Mammary epithelial cell (primary cell): ENCODE measurements at regions of chr12 and their contacts with region 1.

Region 1: GRCh38 chr12:57175428-57176138 is 28.2 kb upstream of the LRP1-AS start:
- DNase-seq: peak; percentile 95
- H3K4me3 ChIP-seq: peak overlapping the region in 2 of 3 experiments; percentile 28 to 31
- H3K27ac ChIP-seq: peak overlapping the region; percentile 5
- H3K4me1 ChIP-seq: peaks cover 30% of the 10 kb centered on the region
- H3K27me3 ChIP-seq: no peaks in the 10 kb centered on the region
- CTCF ChIP-seq: peak; percentile 86 to 91

Region 2: GRCh38 chr12:56709759-56710376 is 465.7 kb before region 1 on chr12:
- CTCF ChIA-PET with region 1: interaction called, 26 read pairs
- dilution Hi-C with region 1: no loop called
- in situ Hi-C with region 1: no loop called
- intact Hi-C with region 1: no loop called
- DNase-seq: no peak
- H3K4me3 ChIP-seq: no peak overlapping the region
- H3K27ac ChIP-seq: no peak overlapping the region
- H3K4me1 ChIP-seq: no peaks in the 10 kb centered on the region
- H3K27me3 ChIP-seq: no peaks in the 10 kb centered on the region
- CTCF ChIP-seq: no peak

Region 3: DNA sequence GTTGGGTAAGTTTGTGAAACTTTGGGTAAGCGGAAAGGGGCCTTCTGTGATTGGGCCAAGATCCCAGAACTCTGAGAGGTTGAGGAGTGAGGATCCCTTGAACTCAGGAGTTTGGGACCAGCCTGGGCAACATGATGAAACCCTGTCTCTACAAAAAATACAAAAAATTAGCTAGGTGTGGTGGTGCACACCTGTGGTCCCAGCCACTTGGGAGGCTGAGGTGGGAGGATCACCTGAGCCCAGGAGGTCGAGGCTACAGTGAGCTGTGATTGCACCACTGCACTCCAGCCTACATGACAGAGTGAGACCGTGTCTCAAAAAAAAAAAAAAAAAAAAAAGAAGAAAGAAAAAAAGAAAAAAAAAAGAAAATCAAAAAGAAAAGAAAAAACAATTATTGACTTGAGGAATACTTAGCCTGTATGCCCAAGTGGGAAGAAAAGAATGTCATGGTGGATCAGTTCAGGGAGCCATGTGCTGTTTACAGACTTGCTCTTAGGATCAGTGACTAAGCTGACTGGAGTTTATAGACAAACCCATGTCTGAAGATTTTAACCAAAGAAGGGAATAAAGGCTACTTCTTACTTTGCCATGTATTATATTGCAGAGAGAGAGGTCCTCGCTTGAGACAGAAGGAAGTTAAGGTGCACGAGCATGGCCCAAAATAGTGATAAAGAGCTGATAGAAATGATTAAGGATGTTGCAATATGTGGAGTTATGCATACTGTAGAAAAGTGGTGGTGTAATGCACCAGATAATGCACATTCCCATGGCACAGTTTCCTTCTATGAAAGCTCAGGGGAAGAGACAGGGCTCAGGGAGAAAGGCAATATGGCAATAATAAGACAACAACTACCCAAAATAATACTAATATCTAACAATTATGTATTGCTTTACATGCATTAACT is 411.6 kb before region 1 on chr12:
- CTCF ChIA-PET with region 1: no interaction called
- dilution Hi-C with region 1: loop called (anchors 5 kb)
- in situ Hi-C with region 1: no loop called
- intact Hi-C with region 1: loop called (anchors 10 kb)
- DNase-seq: no peak
- H3K4me3 ChIP-seq: no peak overlapping the region
- H3K27ac ChIP-seq: no peak overlapping the region
- H3K4me1 ChIP-seq: no peaks in the 10 kb centered on the region
- H3K27me3 ChIP-seq: no peaks in the 10 kb centered on the region
- CTCF ChIP-seq: no peak

Region 4: DNA sequence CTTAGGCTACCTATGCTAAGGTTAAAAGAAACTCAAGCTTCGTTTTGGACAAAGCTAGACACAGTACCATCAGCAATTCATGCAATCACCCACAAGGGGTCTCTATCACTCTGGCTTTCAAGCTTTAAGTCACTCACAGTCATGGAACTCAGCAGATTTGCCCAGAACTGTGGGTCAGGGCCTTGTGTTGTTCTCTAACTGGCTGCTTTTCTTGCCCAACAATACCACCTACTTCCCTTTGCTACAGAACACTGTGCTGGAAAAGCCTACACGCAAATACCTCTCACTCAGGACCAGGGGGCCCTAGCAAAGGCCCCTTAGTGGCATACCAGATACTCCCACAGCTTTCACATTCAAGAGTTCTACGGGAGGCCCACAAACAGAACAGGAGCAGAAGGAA is 106.1 kb before region 1 on chr12:
- CTCF ChIA-PET with region 1: no interaction called
- dilution Hi-C with region 1: no loop called
- in situ Hi-C with region 1: loop called in 1 of 2 experiments (anchors 10 kb)
- intact Hi-C with region 1: loop called (anchors 2 kb)
- DNase-seq: peak; percentile 63
- H3K4me3 ChIP-seq: no peak overlapping the region
- H3K27ac ChIP-seq: no peak overlapping the region
- H3K4me1 ChIP-seq: peaks cover 9% of the 10 kb centered on the region
- H3K27me3 ChIP-seq: no peaks in the 10 kb centered on the region
- CTCF ChIP-seq: peak; percentile 83 to 90

Region 5: DNA sequence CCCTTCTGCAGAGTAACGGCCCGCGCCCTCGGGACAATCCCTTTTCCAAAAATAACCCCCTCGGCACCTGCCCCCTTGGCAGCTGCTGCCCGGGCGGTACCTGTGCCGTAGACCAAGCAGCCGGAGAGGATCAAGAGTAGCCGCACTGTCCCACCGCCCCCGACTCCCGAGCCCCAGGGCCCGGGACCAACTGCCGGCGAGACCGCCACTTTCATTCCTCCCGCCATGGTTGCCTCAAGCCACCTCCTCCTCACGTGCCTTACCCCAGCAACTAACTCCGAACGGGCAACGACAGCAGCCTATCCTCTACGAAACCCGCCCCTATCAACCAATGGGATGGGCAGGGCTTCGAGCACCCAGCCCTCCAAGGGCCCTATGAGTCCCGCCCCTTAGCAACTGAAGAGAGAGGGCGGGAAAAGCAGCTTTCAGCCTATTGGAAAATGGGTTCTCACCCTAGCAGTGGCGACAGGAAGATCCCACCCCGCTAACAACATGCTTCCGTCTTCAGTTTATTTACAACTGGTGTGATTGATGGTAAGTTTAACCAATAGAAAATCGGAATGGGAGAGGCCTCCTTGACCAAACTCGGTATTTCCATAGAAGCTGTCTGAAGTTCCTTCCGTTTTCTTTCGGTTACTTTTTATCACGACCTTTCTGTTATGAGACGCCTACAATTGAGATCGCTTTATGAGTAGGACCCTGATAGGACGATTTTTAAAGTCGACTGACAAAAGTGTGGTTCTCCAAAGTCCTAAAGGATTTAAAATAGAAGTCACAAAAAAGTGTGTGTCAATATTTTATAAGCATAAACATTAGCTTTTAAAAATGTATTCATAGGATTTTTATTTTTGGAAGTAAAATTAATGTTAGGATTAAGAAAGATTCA is 96.8 kb before region 1 on chr12 and contains the start of gene NEMP1:
- CTCF ChIA-PET with region 1: no interaction called
- dilution Hi-C with region 1: loop called (anchors 5 kb)
- in situ Hi-C with region 1: loop called in 1 of 2 experiments (anchors 10 kb)
- intact Hi-C with region 1: no loop called
- DNase-seq: peak; percentile 100
- H3K4me3 ChIP-seq: peak within 1 kb of the TSS; percentile 82 to 97 (median 92)
- H3K27ac ChIP-seq: peak within 1 kb of the TSS; percentile 83
- H3K4me1 ChIP-seq: peaks cover 6% of the 10 kb centered on the region
- H3K27me3 ChIP-seq: no peaks in the 10 kb centered on the region
- CTCF ChIP-seq: no peak
- total RNA-seq, gene NEMP1: 7.3 to 31.0 TPM

Region 6: GRCh38 chr12:57124259-57124877 is 51.2 kb before region 1 on chr12:
- CTCF ChIA-PET with region 1: interaction called, 25 read pairs
- dilution Hi-C with region 1: loop called (anchors 5 kb)
- in situ Hi-C with region 1: loop called in 1 of 2 experiments (anchors 5 kb)
- intact Hi-C with region 1: loop called (anchors 1 kb)
- DNase-seq: peak; percentile 55
- H3K4me3 ChIP-seq: no peak overlapping the region
- H3K27ac ChIP-seq: no peak overlapping the region
- H3K4me1 ChIP-seq: peaks cover 10% of the 10 kb centered on the region
- H3K27me3 ChIP-seq: no peaks in the 10 kb centered on the region
- CTCF ChIP-seq: peak; percentile 91 to 95